Mammary epithelial cell (primary cell): ENCODE measurements at regions of chr10 and their contacts with region 1.

Region 1: GRCh38 chr10:28179006-28179742 is 123.7 kb downstream of the MPP7 start:
- DNase-seq: peak; percentile 26
- H3K4me3 ChIP-seq: no peak overlapping the region
- H3K27ac ChIP-seq: no peak overlapping the region
- H3K4me1 ChIP-seq: peaks cover 5% of the 10 kb centered on the region
- H3K27me3 ChIP-seq: no peaks in the 10 kb centered on the region
- CTCF ChIP-seq: peak; percentile 57 to 68

Region 2: DNA sequence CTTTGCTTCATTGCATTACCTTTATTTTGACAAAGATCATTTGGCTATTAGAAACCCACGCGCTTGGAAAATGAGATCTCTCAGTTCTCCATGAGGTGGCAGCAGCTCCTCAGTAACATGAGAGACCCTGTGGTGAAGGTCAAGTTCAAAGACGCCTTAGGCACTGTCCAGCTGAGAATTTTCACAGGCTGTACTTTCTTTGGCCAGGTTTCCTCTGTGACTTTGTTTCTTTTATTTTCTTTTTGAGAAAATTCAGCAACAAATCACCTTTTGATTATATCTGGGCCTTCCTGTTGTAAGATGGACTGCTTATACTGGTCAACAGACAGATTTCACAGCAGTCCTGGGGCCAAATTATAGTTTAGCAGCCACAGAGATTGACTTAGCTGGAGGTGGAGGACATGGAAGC is 620.6 kb before region 1 on chr10:
- CTCF ChIA-PET with region 1: no interaction called
- dilution Hi-C with region 1: no loop called
- in situ Hi-C with region 1: no loop called
- intact Hi-C with region 1: loop called (anchors 2 kb)
- DNase-seq: peak; percentile 40
- H3K4me3 ChIP-seq: no peak overlapping the region
- H3K27ac ChIP-seq: no peak overlapping the region
- H3K4me1 ChIP-seq: no peaks in the 10 kb centered on the region
- H3K27me3 ChIP-seq: no peaks in the 10 kb centered on the region
- CTCF ChIP-seq: peak; percentile 74 to 77

Region 3: GRCh38 chr10:27759483-27760272 is 419.5 kb before region 1 on chr10:
- CTCF ChIA-PET with region 1: no interaction called
- dilution Hi-C with region 1: no loop called
- in situ Hi-C with region 1: loop called in 1 of 2 experiments (anchors 25 kb)
- intact Hi-C with region 1: no loop called
- DNase-seq: no peak
- H3K4me3 ChIP-seq: no peak overlapping the region
- H3K27ac ChIP-seq: no peak overlapping the region
- H3K4me1 ChIP-seq: no peaks in the 10 kb centered on the region
- H3K27me3 ChIP-seq: no peaks in the 10 kb centered on the region
- CTCF ChIP-seq: peak; percentile 4 to 25

Region 4: DNA sequence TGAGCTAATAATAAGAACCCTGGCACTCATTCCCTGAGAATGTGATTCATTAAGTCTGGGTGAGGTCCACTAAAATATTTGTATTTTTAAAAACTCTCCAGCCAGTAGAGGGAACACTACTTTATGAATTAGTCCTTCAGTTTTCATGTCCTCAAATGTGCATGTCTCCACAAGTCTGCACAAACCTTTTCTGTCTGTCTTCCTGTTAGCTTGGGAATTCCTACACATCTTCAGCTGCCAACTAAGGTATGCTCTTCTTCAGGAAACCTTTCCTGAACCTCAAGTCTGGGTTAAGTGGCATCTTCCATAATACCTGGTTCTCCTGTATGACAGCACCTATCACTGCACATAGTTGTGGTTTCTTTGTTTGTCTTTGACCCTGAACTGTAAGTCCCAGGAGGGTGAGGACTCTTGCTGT is 313.9 kb before region 1 on chr10:
- CTCF ChIA-PET with region 1: interaction called, 3 read pairs
- dilution Hi-C with region 1: no loop called
- in situ Hi-C with region 1: no loop called
- intact Hi-C with region 1: loop called (anchors 1 kb)
- DNase-seq: peak; percentile 89
- H3K4me3 ChIP-seq: no peak overlapping the region
- H3K27ac ChIP-seq: no peak overlapping the region
- H3K4me1 ChIP-seq: peaks cover 13% of the 10 kb centered on the region
- H3K27me3 ChIP-seq: no peaks in the 10 kb centered on the region
- CTCF ChIP-seq: peak in 1 of 2 donors; percentile 31

Region 5: DNA sequence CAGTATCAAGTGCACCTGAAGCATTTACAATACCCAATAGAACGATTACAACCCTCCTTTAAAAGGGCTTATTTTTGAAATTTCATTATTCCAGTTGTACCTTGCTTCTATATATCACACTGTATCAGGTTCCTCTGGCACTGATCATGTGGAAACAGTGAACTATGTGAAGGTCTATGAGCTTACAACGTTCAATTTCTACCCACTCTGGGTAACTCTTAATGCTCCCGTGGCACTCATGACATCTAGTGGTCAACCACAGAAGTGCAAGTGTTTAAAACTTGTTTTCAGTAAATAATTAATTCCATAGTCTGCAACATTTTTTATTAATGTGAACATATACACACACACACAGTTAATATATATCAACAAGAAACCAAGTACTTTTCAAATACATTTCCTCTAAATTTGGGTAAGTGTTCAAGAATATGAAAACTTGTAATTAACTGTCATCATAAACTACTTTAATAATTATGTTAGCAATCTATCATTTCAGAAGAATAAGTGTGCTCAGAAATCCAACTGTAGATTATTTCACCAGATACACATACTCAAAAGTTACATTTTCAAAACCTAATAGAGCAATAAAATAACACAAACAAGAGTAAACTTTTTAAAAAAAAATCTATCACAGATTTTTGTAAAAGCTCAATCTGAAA is 62.7 kb after region 1 on chr10:
- CTCF ChIA-PET with region 1: interaction called, 5 read pairs
- dilution Hi-C with region 1: no loop called
- in situ Hi-C with region 1: no loop called
- intact Hi-C with region 1: loop called (anchors 2 kb)
- DNase-seq: peak; percentile 43
- H3K4me3 ChIP-seq: no peak overlapping the region
- H3K27ac ChIP-seq: no peak overlapping the region
- H3K4me1 ChIP-seq: peaks cover 9% of the 10 kb centered on the region
- H3K27me3 ChIP-seq: no peaks in the 10 kb centered on the region
- CTCF ChIP-seq: peak; percentile 88 to 89